ENCODE measurements at regions of chrX and their contacts with region 1.

Region 1: GRCh38 chrX:24081661-24082264 is 27.0 kb downstream of the EIF2S3 start:
- DNase-seq: peak; percentile 81
- H3K4me3 ChIP-seq: no peak overlapping the region
- H3K27ac ChIP-seq: no peak overlapping the region
- H3K4me1 ChIP-seq: no peaks in the 10 kb centered on the region
- H3K27me3 ChIP-seq: no peaks in the 10 kb centered on the region
- CTCF ChIP-seq: peak in 5 of 11 experiments; percentile 7 to 36 (median 35)
- POLR2A ChIP-seq: no peak

Region 2: DNA sequence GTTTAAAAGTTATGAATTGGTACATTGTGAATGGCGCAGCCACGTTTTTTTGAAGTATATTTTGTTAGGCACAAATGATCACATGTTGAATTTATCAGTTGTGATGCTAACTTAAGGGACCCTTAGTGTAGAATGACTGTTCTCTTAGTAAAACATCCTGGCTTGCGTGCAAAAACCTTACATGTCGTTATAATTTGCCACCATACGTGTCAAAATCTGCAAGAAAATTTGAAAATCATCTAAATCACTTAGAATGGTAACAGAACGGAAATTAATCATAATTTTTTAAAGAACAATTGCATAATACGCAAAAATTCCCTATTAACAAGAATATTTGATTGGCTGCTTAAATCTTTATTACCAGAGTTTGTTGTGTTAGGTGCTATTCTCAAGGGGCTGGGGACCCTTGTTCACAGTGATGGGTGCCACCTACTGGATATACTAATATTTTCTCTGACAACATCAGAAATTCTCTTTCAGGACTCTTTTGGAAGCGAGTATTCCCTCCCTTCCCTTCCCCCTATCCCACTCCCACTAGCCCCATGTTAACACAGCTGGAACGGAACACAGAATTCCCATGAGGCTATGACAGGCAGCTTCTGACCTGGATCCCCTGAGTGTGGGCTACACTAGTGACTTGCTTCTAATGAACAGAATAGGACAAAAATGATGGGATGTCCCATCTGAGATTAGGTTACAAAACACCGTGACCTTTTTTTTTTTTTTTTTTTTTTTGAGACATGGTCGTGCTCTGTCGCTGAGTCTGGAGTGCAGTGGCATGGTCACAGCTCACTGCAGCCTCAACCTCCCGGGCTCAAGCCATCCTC is 160.3 kb after region 1 on chrX:
- intact Hi-C with region 1: loop called (anchors 10 kb)
- DNase-seq: no peak
- H3K4me3 ChIP-seq: no peak overlapping the region
- H3K27ac ChIP-seq: peak overlapping the region in 2 of 8 donors; percentile 28 to 41
- H3K4me1 ChIP-seq: peaks cover 0 to 6% (median 0%) of the 10 kb centered on the region in 6 donors
- H3K27me3 ChIP-seq: no peaks in the 10 kb centered on the region
- CTCF ChIP-seq: peak in 6 of 11 experiments; percentile 12 to 45 (median 36)
- POLR2A ChIP-seq: no peak